Ascending aorta (tissue), 2 donors: ENCODE measurements at regions of chr11 and their contacts with region 1.

Region 1: DNA sequence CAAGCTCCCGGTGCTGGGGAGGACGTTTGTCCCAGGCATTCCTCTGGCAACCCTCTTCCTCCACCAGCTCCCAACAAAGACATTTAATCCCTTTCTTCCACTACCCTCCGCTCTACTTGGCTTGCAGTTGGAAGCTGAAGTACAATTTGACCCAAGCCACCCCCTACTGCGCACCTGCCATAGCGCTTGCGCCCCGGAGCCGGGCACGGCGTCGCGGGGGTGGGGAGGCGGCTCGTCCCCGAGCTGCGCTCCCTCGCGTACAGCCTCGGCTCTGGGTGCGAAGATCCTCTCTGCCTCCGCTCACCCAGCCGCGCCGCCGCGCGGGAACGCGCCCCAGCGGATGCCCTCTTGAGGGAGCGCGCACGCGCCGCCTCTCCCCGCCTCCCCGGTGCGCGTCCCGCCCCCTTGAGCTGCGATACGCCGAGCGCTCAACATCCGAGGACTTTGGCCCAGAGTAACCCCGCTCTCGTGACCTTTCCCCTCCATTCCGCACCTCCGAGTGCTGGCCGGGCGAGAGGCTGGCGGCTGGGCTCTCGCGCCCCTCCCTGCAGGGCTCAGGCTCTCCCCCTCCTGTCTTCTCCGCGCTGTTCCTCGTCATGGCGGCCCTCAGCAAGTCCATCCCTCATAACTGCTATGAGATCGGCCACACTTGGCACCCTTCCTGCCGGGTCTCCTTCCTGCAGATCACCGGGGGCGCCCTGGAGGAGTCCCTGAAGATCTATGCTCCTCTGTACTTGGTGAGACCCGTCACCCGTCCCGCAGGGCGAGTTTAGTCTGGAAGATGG is at the start of gene TMEM135:
- DNase-seq: peak; percentile 75 to 96
- H3K4me3 ChIP-seq: peak within 1 kb of the TSS; percentile 81 to 90
- H3K27ac ChIP-seq: peak within 1 kb of the TSS; percentile 87 to 90
- H3K4me1 ChIP-seq: peaks cover 0 to 21% of the 10 kb centered on the region in 2 donors
- H3K27me3 ChIP-seq: no peaks in the 10 kb centered on the region
- CTCF ChIP-seq: peak in 1 of 3 experiments; percentile 25
- total RNA-seq, gene TMEM135: 18.4 TPM

Region 2: DNA sequence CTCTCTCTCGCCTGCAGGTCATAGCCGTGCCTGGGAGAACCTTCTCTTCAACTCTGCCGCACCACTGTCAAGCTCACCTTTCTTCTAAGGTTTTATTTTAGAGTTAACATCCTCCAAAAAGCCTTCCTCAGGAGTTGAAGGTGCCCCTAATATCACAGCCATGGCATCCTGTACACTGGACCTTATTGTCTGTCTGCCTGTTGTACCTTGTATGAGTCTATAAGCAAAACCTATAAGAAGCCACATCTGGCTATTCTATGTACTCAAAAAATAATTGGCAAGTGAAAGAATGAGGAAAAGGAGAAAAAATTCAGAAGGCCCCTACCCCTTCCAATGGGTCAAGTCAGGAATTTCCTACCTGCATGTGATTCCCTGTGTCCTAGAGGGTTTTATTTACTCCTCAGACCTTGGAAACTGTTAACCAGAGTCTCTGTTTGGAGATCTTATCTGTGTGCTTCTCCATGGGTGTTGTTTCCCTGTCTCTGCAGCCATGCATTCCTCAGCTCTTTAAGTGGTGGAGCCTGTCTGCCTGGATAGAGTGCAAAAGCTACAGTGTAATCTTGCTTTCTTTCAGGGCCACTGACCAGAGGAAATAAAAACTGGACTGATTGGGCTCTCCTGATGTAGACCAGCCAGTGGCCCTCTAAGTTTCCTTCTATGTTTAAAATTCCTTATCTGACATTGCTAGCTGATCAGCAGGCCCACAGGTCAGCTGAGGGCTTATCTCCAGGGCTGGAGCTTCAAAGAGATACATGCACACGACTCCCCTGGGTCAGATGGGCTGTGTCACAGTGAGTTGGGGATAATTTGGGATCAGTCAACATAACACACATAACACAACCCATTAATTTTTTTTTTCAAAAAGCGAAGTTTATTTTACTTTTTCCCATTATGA is 37.5 kb before region 1 on chr11:
- intact Hi-C with region 1: no loop called
- DNase-seq: no peak
- H3K4me3 ChIP-seq: no peak overlapping the region
- H3K27ac ChIP-seq: peak overlapping the region; percentile 33 to 57
- H3K4me1 ChIP-seq: peaks cover 0 to 8% of the 10 kb centered on the region in 2 donors
- H3K27me3 ChIP-seq: no peaks in the 10 kb centered on the region
- CTCF ChIP-seq: no peak

Region 3: DNA sequence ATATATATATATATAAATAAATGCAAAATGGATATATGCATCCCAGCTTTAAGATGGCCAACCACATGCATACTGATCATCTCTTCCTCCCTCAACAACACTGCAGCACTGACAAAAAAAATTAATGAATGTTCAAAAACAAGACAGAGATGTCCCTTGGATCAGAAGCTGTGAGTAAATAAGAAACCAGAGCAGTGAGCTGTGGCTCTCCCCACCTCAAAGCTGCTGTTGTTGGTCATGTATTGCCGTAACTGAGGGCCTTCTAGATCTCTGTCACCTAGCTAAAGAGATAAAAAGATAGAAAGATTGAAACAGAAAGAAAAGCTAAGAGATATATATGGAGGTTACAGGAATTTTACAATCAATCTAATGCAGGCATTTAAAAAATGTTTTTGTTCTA is 15.4 kb before region 1 on chr11:
- intact Hi-C with region 1: no loop called
- DNase-seq: no peak
- H3K4me3 ChIP-seq: no peak overlapping the region
- H3K27ac ChIP-seq: no peak overlapping the region
- H3K4me1 ChIP-seq: no peaks in the 10 kb centered on the region
- H3K27me3 ChIP-seq: no peaks in the 10 kb centered on the region
- CTCF ChIP-seq: no peak

Region 4: DNA sequence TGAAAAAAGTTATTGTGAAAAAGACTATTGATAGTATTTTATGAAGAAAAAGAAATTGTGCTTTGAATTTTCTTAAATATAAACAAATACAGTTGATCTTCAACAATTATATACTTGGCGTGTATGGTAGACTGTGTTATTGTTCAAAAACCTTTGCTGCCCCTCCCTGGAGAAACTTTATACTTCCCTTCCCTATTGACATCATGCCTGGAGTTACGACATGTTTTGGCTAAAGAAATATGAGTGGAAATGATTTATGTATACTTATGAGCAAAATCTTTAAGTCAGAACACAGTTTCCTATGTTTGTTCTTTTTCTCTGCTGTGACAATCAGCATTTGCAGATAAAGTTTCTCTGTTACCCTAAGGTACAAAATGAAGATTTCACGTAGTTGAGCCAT is 243.9 kb after region 1 on chr11:
- intact Hi-C with region 1: loop called (anchors 5 kb)
- DNase-seq: no peak
- H3K4me3 ChIP-seq: no peak overlapping the region
- H3K27ac ChIP-seq: no peak overlapping the region
- H3K4me1 ChIP-seq: peaks cover 0 to 3% of the 10 kb centered on the region in 2 donors
- H3K27me3 ChIP-seq: no peaks in the 10 kb centered on the region
- CTCF ChIP-seq: peak in 2 of 3 experiments; percentile 29 to 46